K562 (cell line): ENCODE measurements at regions of chr15 and their contacts with region 1.

Region 1: GRCh38 chr15:98853161-98853560 is 154.4 kb downstream of the PGPEP1L start:
- DNase-seq: peak; percentile 50 to 55 (median 53)
- ATAC-seq: peak; percentile 91
- H3K4me3 ChIP-seq: no peak overlapping the region
- H3K27ac ChIP-seq: no peak overlapping the region
- H3K4me1 ChIP-seq: peaks cover 0 to 8% of the 10 kb centered on the region in 2 experiments; a peak in 1 of 5 replicates
- H3K27me3 ChIP-seq: peaks cover 21 to 62% of the 10 kb centered on the region in 2 experiments
- CTCF ChIP-seq: no peak
- EP300 ChIP-seq: no peak
- POLR2A ChIP-seq: no peak
- RAD21 ChIP-seq: 0 out of 4 replicates have a peak, but pooled peaks of 1 of the 2 experiments have one; percentile 5

Region 2: GRCh38 chr15:98647774-98648653 is 205.1 kb before region 1 on chr15 and contains the start of gene IGF1R:
- CTCF ChIA-PET with region 1: no interaction called
- POLR2A ChIA-PET with region 1: no interaction called
- in situ Hi-C with region 1: no loop called
- intact Hi-C with region 1: loop called (anchors 1 kb)
- DNase-seq: peak; percentile 89 to 91 (median 90)
- ATAC-seq: peak; percentile 76
- H3K4me3 ChIP-seq: peak within 1 kb of the TSS; percentile 63
- H3K27ac ChIP-seq: peak within 1 kb of the TSS; percentile 63; the same call in 2 of the 3 replicates
- H3K4me1 ChIP-seq: peaks cover 3 to 30% of the 10 kb centered on the region in 2 experiments; a peak in 4 of 5 replicates
- H3K27me3 ChIP-seq: peaks cover 2 to 25% of the 10 kb centered on the region in 2 experiments; a peak in 4 of 5 replicates
- CTCF ChIP-seq: no peak
- EP300 ChIP-seq: no peak
- POLR2A ChIP-seq: no peak
- RAD21 ChIP-seq: no peak
- polyA plus RNA-seq, gene IGF1R: 0.35 to 0.38 TPM